AG04450 (cell line): ENCODE measurements at regions of chr1 and their contacts with region 1.

Region 1: DNA sequence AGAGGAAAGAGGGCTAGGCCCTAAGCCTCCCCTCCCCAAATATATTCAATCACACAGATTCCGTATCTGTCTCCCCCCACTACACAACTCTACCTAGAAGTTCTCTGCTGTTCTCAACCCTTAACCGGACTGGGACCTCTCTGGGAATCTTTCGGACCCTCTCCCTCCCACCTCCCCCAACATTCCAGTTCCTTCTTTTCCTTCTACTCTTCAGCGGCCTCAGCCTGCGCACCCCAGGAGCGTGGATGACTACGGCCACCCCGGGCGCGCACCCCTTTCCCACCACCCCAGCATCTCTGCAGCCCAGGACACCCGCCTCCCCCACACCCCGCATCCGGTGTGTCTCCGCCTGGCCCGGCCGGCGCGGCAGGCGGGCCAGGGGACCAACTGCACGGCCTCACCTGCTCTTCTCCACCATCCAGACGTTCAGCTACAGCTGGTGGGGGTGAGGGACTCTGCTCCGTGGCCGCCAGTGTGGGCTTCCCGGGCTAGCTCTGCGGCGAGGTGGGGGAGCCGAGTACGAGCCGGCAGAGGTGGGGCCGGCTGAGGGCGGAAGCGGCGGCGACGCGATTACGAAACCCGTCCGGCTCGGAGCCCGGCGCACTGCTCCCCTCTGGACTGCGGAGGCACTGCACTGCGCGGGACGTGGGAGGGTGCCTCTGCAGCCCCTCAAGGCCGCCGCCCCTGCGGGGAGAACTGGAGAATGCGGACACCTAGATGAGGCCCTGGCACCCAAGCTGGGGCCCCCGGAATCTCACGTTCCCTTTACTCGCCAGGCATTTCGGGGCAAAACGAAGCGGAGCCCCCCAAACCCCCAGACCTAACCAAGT is at the start of gene CDC42SE1:
- DNase-seq: peak; percentile 45
- H3K4me3 ChIP-seq: peak within 1 kb of the TSS; percentile 84
- H3K27ac ChIP-seq: peak within 1 kb of the TSS; percentile 92
- H3K27me3 ChIP-seq: no peaks in the 10 kb centered on the region
- CTCF ChIP-seq: peak; percentile 76
- polyA plus RNA-seq, gene CDC42SE1: 66.3 and 70.3 TPM in 2 replicates

Region 2: GRCh38 chr1:151047925-151048645 is 11.2 kb before region 1 on chr1:
- CTCF ChIA-PET with region 1: interaction called, 6 read pairs
- POLR2A ChIA-PET with region 1: interaction called, 24 read pairs
- DNase-seq: no peak
- H3K4me3 ChIP-seq: peak overlapping the region; percentile 78
- H3K27ac ChIP-seq: peak overlapping the region; percentile 68
- H3K27me3 ChIP-seq: no peaks in the 10 kb centered on the region
- CTCF ChIP-seq: peak; percentile 61

Region 3: GRCh38 chr1:151526735-151527525 is 467.6 kb after region 1 on chr1:
- CTCF ChIA-PET with region 1: no interaction called
- POLR2A ChIA-PET with region 1: no interaction called
- DNase-seq: no peak
- H3K4me3 ChIP-seq: no peak overlapping the region
- H3K27ac ChIP-seq: no peak overlapping the region
- H3K27me3 ChIP-seq: no peaks in the 10 kb centered on the region
- CTCF ChIP-seq: no peak